ENCODE measurements at regions of chr18 and their contacts with region 1.

Region 1: GRCh38 chr18:54127759-54128378 is 96.6 kb downstream of the MBD2 start:
- DNase-seq: peak; percentile 31
- H3K4me3 ChIP-seq: no peak overlapping the region
- H3K27ac ChIP-seq: no peak overlapping the region
- H3K4me1 ChIP-seq: no peaks in the 10 kb centered on the region
- H3K27me3 ChIP-seq: no peaks in the 10 kb centered on the region
- CTCF ChIP-seq: no peak

Region 2: DNA sequence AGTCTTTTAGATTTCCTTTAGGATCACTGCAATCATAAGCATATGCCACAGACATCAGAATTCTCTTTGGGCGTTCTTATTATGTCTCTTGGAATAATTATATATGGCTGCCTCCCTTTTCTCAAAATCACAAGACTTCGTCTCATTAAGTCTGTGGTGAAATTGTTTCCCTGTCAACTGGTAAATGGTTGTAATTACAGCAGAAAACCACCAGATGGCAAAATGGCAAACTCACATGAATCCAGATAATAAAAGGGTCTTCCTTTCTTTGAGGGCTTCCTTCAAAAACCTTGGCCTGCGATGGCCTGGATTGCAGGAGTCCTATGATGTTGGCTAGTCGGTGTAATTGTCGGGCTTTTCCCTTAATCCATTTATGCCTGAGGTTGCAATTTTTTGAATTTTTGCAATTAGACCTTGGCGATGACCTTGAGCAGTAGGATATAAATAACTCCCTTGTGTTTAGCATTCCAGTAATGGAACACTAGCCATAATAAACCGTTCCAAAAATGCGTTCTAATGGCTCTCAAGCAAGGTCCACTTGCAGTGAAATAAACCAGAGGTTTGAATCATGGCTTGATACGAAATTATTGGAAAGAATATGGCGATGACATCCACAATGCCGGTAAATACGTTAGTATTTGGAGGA is 559.8 kb before region 1 on chr18:
- intact Hi-C with region 1: loop called (anchors 5 kb)
- DNase-seq: no peak
- H3K4me3 ChIP-seq: no peak overlapping the region
- H3K27ac ChIP-seq: no peak overlapping the region
- H3K4me1 ChIP-seq: no peaks in the 10 kb centered on the region
- H3K27me3 ChIP-seq: no peaks in the 10 kb centered on the region
- CTCF ChIP-seq: no peak